Ascending aorta (tissue), 2 donors: ENCODE measurements at regions of chr3 and their contacts with region 1.

Region 1: DNA sequence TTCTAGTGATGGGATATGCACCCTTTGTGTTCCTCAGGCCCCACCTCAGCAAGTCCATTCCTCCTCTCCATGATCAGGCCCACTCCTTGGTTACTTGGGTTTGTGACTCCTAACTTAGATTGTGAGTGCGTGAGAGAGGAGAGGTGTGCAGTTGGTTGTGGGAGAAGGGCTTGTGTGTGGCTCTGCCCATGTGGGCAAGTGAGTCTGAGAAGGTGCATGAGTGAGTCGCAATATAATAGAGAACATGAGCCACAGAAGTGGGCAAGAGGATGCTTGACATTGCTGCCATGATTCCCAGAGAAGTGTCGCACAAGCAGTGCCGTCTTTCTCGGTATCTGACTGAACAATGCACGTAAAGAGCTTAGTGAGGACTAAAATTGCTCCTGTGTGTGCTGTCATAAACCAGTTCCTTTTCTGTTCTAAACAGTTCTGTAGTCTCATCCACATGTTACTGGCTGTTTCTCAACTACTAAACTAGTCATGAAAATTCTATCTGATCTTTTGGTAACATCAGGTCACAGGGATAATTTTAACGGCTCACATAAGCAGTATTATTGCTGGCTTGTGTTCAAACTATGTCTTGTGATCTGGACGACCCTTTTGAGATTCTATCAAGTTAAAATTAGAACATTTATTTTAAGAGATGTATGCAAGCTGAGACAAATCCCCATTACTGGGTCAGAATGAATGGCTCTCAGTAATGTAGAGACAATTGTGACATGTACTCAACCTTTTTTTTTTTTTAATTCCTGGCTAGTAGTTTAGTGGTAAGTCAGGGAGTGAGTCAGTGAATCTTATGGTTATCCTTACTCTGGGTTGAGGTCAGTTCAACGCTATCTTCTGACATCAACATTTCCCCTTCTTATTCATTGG is 25.6 kb downstream of the GYG1 start:
- DNase-seq: no peak
- H3K4me3 ChIP-seq: no peak overlapping the region
- H3K27ac ChIP-seq: peak overlapping the region; percentile 84 to 90
- H3K4me1 ChIP-seq: peaks cover 11 to 69% of the 10 kb centered on the region in 2 donors
- H3K27me3 ChIP-seq: no peaks in the 10 kb centered on the region
- CTCF ChIP-seq: no peak

Region 2: DNA sequence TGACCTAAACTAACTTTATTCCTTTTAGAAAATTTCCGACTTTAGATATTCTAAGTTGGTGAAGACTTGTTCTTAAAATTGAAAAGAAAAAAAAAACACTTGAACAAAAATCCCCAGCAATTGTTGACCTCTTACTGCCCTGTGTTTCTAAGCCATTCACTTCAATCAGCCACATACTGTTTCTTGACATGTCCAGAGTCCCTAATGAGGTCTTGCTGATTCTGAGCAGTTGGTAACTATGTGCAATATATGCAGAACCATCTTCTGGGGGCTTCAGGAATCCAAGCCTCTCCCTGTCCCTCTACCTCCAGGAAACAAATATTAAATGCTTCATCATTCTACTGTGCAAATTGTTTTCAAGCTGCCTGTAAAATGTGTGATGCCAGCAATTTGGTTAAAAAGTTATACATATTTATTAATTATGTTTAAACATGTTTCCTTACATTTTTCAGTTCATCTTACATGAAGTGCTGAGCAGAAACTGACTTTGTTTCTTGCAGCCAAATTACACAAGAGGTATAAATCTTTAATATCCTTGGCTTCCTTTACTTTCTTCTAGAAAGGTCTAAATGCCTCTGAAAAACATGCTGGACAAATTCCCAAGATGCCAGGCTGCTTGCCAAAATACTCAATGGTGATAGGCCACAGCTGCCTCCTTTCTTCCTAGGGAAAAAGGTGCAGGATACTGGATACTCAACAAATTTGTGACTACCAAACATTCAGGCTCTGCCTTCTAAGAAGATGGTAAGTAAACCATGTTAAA is 45.3 kb before region 1 on chr3:
- intact Hi-C with region 1: loop called (anchors 5 kb)
- DNase-seq: no peak
- H3K4me3 ChIP-seq: no peak overlapping the region
- H3K27ac ChIP-seq: peak overlapping the region; percentile 51 to 82
- H3K4me1 ChIP-seq: peaks cover 0 to 35% of the 10 kb centered on the region in 2 donors
- H3K27me3 ChIP-seq: no peaks in the 10 kb centered on the region
- CTCF ChIP-seq: no peak

Region 3: GRCh38 chr3:148991194-148992026 is 25.5 kb before region 1 on chr3 and contains the start of gene GYG1:
- intact Hi-C with region 1: loop called (anchors 1 kb)
- DNase-seq: peak in 1 of 2 donors; percentile 93
- H3K4me3 ChIP-seq: peak within 1 kb of the TSS; percentile 69 to 94
- H3K27ac ChIP-seq: peak within 1 kb of the TSS; percentile 91 to 100
- H3K4me1 ChIP-seq: peaks cover 5 to 16% of the 10 kb centered on the region in 2 donors
- H3K27me3 ChIP-seq: no peaks in the 10 kb centered on the region
- CTCF ChIP-seq: peak in 2 of 3 experiments; percentile 22 to 47
- total RNA-seq, gene GYG1: 23.9 TPM

Region 4: GRCh38 chr3:149067883-149068282 is 51.0 kb after region 1 on chr3:
- intact Hi-C with region 1: no loop called
- DNase-seq: no peak
- H3K4me3 ChIP-seq: no peak overlapping the region
- H3K27ac ChIP-seq: no peak overlapping the region
- H3K4me1 ChIP-seq: no peaks in the 10 kb centered on the region
- H3K27me3 ChIP-seq: no peaks in the 10 kb centered on the region
- CTCF ChIP-seq: no peak

Region 5: GRCh38 chr3:149407898-149408297 is 391.0 kb after region 1 on chr3:
- intact Hi-C with region 1: no loop called
- DNase-seq: no peak
- H3K4me3 ChIP-seq: no peak overlapping the region
- H3K27ac ChIP-seq: no peak overlapping the region
- H3K4me1 ChIP-seq: no peaks in the 10 kb centered on the region
- H3K27me3 ChIP-seq: no peaks in the 10 kb centered on the region
- CTCF ChIP-seq: no peak